Adrenal gland (tissue), 19 donors: ENCODE measurements at regions of chr15 and their contacts with region 1.

Region 1: DNA sequence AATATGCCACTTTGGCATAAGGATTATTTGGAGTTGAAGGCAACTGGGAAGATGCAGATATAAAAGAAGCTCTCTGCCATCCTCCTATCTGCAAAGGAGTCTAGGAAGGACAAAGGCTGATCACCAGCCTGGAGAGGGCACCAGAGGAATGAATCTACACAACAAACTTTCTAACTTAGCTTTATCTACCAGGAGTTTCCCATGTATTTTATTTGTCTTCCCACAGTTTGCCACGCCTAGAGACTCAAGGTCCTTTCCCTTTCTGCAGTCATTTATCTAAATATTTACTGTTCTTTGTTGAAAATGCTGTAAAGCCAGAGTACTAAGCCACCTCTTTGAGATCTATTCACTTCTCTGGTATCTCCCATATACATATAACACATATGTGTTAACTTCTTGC is 32.2 kb downstream of the GPR176 start:
- DNase-seq: peak; percentile 49 to 74 (median 57)
- H3K4me3 ChIP-seq: no peak overlapping the region
- H3K27ac ChIP-seq: no peak overlapping the region
- H3K4me1 ChIP-seq: no peaks in the 10 kb centered on the region
- H3K27me3 ChIP-seq: no peaks in the 10 kb centered on the region
- CTCF ChIP-seq: peak; percentile 18 to 57 (median 50)
- POLR2A ChIP-seq: no peak

Region 2: GRCh38 chr15:39770748-39771689 is 116.8 kb before region 1 on chr15:
- intact Hi-C with region 1: no loop called
- DNase-seq: no peak
- H3K4me3 ChIP-seq: no peak overlapping the region
- H3K27ac ChIP-seq: peak overlapping the region in 2 of 5 donors; percentile 24 to 42
- H3K4me1 ChIP-seq: no peaks in the 10 kb centered on the region
- H3K27me3 ChIP-seq: no peaks in the 10 kb centered on the region
- CTCF ChIP-seq: no peak
- POLR2A ChIP-seq: no peak

Region 3: GRCh38 chr15:39782441-39783138 is 105.2 kb before region 1 on chr15 and contains the start of gene FSIP1:
- intact Hi-C with region 1: loop called in 1 of 2 experiments (anchors 10 kb)
- DNase-seq: peak; percentile 96 to 99 (median 98)
- H3K4me3 ChIP-seq: peak within 1 kb of the TSS; percentile 31 to 91 (median 68)
- H3K27ac ChIP-seq: peak within 1 kb of the TSS in 2 of 5 donors; percentile 72 to 85
- H3K4me1 ChIP-seq: peaks cover 0 to 21% of the 10 kb centered on the region in 2 donors
- H3K27me3 ChIP-seq: no peaks in the 10 kb centered on the region
- CTCF ChIP-seq: no peak
- POLR2A ChIP-seq: peak; percentile 57 to 72
- total RNA-seq, gene FSIP1: 0.11 to 0.60 (median 0.23) TPM in 7 of 9 donors, not detected in the others

Region 4: GRCh38 chr15:39946862-39947261 is 59.0 kb after region 1 on chr15:
- intact Hi-C with region 1: no loop called
- DNase-seq: no peak
- H3K4me3 ChIP-seq: no peak overlapping the region
- H3K27ac ChIP-seq: no peak overlapping the region
- H3K4me1 ChIP-seq: peaks cover 10 to 13% of the 10 kb centered on the region in 2 donors
- H3K27me3 ChIP-seq: no peaks in the 10 kb centered on the region
- CTCF ChIP-seq: no peak
- POLR2A ChIP-seq: no peak

Region 5: DNA sequence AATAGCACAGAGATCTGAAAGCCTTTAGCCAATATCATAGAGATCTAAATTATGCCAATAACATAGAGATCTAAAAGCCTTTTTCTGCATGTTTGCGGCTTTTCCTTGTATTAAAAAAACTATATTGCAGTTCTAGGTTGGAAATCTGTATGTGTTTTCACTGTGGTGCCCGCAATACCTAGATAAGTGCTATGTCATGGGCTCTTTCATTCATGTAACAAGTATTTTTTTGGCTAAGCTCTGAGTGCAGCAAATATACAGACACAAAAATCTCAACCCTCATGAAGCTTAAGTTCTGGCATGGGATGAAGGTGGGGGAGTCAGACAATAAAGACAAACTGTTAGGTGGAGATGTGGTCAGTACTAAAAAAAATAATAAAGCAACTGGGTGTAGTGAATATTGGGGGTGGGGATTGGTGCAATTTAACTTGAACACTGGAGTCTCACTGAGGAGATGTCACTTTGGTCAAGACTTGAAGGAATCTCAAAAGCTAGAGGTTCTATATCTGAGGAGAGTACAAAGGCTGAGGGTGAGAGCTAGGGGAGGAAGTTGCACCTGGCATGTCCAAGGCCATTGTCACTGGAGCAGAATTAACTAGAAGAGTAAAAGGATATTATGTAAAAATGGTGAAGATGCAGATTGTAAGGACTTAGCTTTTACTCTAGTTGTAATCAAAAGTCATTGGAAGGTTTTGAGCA is 274.0 kb after region 1 on chr15:
- intact Hi-C with region 1: no loop called
- DNase-seq: no peak
- H3K4me3 ChIP-seq: peak overlapping the region in 1 of 4 donors; percentile 55
- H3K27ac ChIP-seq: no peak overlapping the region
- H3K4me1 ChIP-seq: peaks cover 0 to 8% of the 10 kb centered on the region in 2 donors
- H3K27me3 ChIP-seq: no peaks in the 10 kb centered on the region
- CTCF ChIP-seq: no peak
- POLR2A ChIP-seq: no peak